ENCODE measurements at regions of chr12 and their contacts with region 1.

Region 1: DNA sequence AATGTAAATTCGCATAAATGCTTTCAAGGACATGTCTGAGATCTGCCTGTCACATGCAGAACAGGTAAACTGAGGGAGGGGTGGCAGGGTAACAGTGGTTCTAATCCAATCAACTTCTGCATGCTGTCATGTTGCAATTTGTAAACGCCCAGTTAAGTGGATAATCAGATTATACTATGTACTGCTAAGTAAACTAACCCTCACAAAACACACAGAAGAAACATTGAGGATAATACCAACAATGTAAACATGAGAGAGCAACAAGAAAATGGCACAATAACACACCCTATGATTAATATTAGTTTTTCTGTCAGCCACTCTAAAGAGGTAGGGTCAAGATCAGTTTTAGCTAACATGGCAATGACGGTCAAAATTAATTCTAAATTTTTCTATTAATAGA is 123.7 kb downstream of the KIF21A start:
- DNase-seq: no peak
- ATAC-seq: no peak
- H3K4me3 ChIP-seq: no peak overlapping the region
- H3K27ac ChIP-seq: no peak overlapping the region
- H3K4me1 ChIP-seq: no peaks in the 10 kb centered on the region
- H3K27me3 ChIP-seq: no peaks in the 10 kb centered on the region
- CTCF ChIP-seq: no peak
- EP300 ChIP-seq: no peak
- POLR2A ChIP-seq: no peak
- RAD21 ChIP-seq: no peak

Region 2: GRCh38 chr12:39372929-39373328 is 53.7 kb after region 1 on chr12:
- CTCF ChIA-PET with region 1: interaction called, 4 read pairs
- POLR2A ChIA-PET with region 1: no interaction called
- RAD21 ChIA-PET with region 1: no interaction called
- SMC1A ChIA-PET with region 1: interaction called, 4 read pairs
- in situ Hi-C with region 1: no loop called
- intact Hi-C with region 1: loop called (anchors 5 kb)
- DNase-seq: peak; percentile 61
- ATAC-seq: peak; percentile 96
- H3K4me3 ChIP-seq: no peak overlapping the region
- H3K27ac ChIP-seq: peak overlapping the region; percentile 50
- H3K4me1 ChIP-seq: peaks cover 27% of the 10 kb centered on the region
- H3K27me3 ChIP-seq: no peaks in the 10 kb centered on the region
- CTCF ChIP-seq: no peak
- EP300 ChIP-seq: 0 out of 4 replicates have a peak, but pooled peaks of 1 of the 2 experiments have one; percentile 8
- POLR2A ChIP-seq: no peak
- RAD21 ChIP-seq: no peak

Region 3: DNA sequence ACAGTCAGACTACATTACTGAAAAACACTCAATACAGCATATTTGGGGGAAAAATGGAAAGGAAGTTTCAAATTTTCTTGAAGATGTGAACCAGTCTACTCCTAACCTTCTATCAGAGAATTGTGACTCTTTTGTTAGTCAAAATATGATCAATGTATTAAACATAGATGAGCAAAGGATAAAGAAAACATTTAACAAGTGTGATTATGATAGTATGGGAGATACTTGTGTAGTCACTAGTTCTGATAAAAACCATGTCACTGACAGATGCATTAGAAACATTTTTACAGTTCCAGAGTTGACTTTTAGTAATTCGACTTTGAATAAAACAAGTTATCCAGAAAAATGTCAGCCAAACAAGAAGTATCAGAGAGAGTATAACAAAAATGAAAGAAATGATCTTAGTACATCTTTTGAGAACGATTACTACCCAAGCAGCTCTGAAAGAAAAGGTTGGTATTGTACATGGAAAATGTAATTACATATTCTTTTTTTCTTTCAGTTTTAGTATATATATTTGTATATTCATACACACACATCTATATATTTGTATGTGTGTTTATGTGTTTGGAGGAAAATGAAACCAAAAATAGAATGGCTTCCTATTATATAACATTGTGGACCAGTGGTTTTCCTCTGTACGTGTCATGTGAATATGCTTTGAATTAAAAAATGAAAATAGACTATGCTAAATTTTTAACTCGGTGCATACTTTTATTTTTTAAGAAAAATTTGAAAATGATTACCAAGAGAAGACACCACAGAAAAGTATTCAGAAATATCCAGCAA is 363.7 kb after region 1 on chr12:
- CTCF ChIA-PET with region 1: interaction called, 5 read pairs
- POLR2A ChIA-PET with region 1: no interaction called
- RAD21 ChIA-PET with region 1: no interaction called
- SMC1A ChIA-PET with region 1: interaction called, 3 read pairs
- in situ Hi-C with region 1: loop called (anchors 10 kb)
- intact Hi-C with region 1: no loop called
- DNase-seq: no peak
- ATAC-seq: no peak
- H3K4me3 ChIP-seq: no peak overlapping the region
- H3K27ac ChIP-seq: no peak overlapping the region
- H3K4me1 ChIP-seq: no peaks in the 10 kb centered on the region
- H3K27me3 ChIP-seq: no peaks in the 10 kb centered on the region
- CTCF ChIP-seq: no peak
- EP300 ChIP-seq: no peak
- POLR2A ChIP-seq: no peak
- RAD21 ChIP-seq: no peak